ENCODE measurements at regions of chr10 and their contacts with region 1.

Region 1: DNA sequence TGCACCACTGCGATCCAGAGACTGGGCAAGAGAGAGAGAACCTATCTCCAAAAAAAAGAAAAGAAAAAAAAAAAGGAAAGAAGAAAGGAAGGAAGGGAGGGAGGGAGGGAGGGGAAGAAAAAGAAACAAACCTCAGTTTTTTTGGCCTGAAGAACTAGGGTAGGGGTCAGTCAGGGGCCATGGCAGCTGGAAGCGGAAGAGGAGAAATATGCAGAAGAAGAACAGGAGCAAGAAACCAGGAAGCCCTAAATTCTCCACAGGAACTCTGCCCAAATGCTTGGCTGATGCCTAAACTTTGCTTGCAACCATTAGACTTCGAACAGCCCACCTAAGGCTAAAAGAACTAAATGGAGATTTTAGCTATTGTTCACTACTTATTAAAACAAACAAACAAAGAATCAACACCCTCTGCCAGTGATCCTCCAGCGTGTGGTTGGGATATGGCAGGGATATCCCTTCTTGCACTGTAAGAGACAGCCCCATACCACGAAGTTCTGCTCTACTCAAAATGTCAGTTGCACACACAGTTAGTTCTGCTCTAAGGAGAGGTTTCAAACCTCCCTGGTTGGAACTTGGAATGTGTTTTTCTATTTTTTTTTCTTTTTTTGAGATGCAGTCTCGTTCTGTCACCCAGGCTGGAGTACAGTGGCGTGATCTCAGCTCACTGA is 139.5 kb downstream of the FAM107B start:
- DNase-seq: no peak
- ATAC-seq: no peak
- H3K4me3 ChIP-seq: no peak overlapping the region
- H3K4me3 Mint-ChIP-seq: no peak overlapping the region
- H3K27ac ChIP-seq: no peak overlapping the region
- H3K27ac Mint-ChIP-seq: no peak overlapping the region
- H3K4me1 ChIP-seq: no peaks in the 10 kb centered on the region
- H3K4me1 Mint-ChIP-seq: peaks cover under 1% of the 10 kb centered on the region
- H3K27me3 ChIP-seq: no peaks in the 10 kb centered on the region
- H3K27me3 Mint-ChIP-seq: no peaks in the 10 kb centered on the region
- CTCF ChIP-seq: no peak

Region 2: GRCh38 chr10:15112657-15113056 is 477.5 kb after region 1 on chr10:
- CTCF ChIA-PET with region 1: no interaction called
- POLR2A ChIA-PET with region 1: no interaction called
- intact Hi-C with region 1: loop called in 1 of 2 experiments (anchors 5 kb)
- DNase-seq: no peak
- ATAC-seq: no peak
- H3K4me3 ChIP-seq: no peak overlapping the region
- H3K4me3 Mint-ChIP-seq: no peak overlapping the region
- H3K27ac ChIP-seq: no peak overlapping the region
- H3K27ac Mint-ChIP-seq: no peak overlapping the region
- H3K4me1 ChIP-seq: no peaks in the 10 kb centered on the region
- H3K4me1 Mint-ChIP-seq: no peaks in the 10 kb centered on the region
- H3K27me3 ChIP-seq: no peaks in the 10 kb centered on the region
- H3K27me3 Mint-ChIP-seq: no peaks in the 10 kb centered on the region
- CTCF ChIP-seq: no peak